Aorta (tissue), 5 donors: ENCODE measurements at regions of chr3 and their contacts with region 1.

Region 1: GRCh38 chr3:65720989-65721737 is 317.6 kb downstream of the MAGI1 start:
- DNase-seq: no peak
- ATAC-seq: no peak
- H3K4me3 ChIP-seq: no peak overlapping the region
- H3K27ac ChIP-seq: no peak overlapping the region
- H3K4me1 ChIP-seq: no peaks in the 10 kb centered on the region
- H3K27me3 ChIP-seq: no peaks in the 10 kb centered on the region

Region 2: GRCh38 chr3:65672871-65673815 is 48.0 kb before region 1 on chr3:
- intact Hi-C with region 1: loop called in 1 of 2 experiments (anchors 5 kb)
- DNase-seq: peak; percentile 56 to 88
- ATAC-seq: no peak
- H3K4me3 ChIP-seq: no peak overlapping the region
- H3K27ac ChIP-seq: no peak overlapping the region
- H3K4me1 ChIP-seq: peaks cover 0 to 3% of the 10 kb centered on the region in 2 donors
- H3K27me3 ChIP-seq: no peaks in the 10 kb centered on the region